ENCODE measurements at regions of chr1 and their contacts with region 1.

Region 1: DNA sequence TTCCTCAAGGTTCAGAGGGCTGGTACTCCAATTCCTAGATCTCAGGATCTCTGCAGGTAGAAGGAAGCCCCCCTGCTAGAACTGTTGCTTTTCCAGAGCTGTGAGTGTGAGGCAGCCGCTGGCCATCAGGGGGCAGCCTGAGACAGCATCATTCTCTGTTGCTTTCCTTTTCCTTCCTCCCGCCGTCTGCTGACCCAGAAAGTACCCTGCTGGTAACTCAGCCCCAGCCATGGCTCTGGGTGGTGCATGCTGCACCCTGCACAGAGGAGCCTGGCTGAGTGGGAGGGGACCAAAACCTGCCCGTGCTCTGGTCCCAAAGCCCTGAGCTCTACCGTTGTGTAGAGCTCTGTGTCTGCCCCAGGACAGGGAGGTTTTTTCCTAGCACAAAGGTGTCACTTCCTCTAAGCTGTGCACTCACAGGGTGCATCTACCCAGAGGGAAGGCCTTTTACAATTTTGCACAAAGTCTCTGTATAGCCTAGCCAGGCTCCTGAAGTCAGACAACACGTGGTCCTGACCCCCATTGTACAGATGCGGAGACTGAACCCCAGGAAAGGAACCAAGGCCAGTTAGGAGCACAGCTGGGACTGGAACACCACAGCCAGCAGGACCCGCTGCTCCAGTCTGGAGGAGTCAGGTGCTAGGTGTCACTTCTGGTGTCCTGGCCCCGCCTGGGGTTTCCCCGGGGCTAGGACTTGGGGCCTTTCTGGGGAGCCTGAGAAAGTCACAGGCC is 5.6 kb upstream of the FAM131C start:
- DNase-seq: peak; percentile 85 to 93
- H3K4me3 ChIP-seq: no peak overlapping the region
- H3K27ac ChIP-seq: peak overlapping the region in 1 of 5 donors; percentile 49
- H3K4me1 ChIP-seq: peaks cover 8 to 39% (median 31%) of the 10 kb centered on the region in 4 donors
- H3K27me3 ChIP-seq: peaks cover 0 to 6% (median 0%) of the 10 kb centered on the region in 3 donors
- CTCF ChIP-seq: peak in 5 of 7 experiments; percentile 83 to 94 (median 87)
- EP300 ChIP-seq: no peak
- POLR2A ChIP-seq: no peak

Region 2: DNA sequence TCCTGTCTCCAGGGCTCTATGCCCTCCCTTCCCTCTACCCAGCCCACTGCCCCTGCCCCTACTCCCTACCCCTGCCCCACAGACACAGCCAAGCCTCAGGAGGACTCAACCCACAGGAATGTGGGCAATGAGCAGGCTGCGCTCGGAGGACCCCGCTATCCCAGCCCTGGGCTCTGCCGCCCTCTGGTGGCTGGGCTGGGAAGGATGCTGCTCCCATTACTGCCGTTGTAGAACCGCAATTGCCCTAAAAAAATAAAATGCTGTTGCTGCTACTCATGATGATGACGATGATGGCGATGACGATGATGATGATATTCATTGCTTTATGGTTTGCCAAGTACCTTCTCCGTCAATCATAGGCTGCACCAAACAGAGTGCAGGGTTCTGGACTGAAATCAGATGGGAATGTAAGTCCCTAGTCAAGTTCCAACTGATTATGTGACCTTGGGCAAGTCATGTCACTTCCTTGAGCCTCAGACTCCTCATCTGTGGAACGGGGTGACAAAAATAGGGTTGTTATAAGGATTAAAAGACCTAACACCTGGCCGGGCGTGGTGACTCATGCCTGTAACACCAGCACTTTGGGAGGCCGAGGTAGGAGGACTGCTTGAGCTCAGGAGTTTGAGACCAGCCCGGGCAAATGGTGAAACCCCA is 108.8 kb after region 1 on chr1:
- intact Hi-C with region 1: loop called (anchors 2 kb)
- DNase-seq: peak; percentile 82 to 93
- H3K4me3 ChIP-seq: no peak overlapping the region
- H3K27ac ChIP-seq: peak overlapping the region in 1 of 5 donors; percentile 46
- H3K4me1 ChIP-seq: peaks cover 0 to 41% (median 24%) of the 10 kb centered on the region in 4 donors
- H3K27me3 ChIP-seq: peaks cover 0 to 15% (median 0%) of the 10 kb centered on the region in 3 donors
- CTCF ChIP-seq: peak in 5 of 7 experiments; percentile 89 to 99 (median 98)
- EP300 ChIP-seq: no peak
- POLR2A ChIP-seq: no peak

Region 3: DNA sequence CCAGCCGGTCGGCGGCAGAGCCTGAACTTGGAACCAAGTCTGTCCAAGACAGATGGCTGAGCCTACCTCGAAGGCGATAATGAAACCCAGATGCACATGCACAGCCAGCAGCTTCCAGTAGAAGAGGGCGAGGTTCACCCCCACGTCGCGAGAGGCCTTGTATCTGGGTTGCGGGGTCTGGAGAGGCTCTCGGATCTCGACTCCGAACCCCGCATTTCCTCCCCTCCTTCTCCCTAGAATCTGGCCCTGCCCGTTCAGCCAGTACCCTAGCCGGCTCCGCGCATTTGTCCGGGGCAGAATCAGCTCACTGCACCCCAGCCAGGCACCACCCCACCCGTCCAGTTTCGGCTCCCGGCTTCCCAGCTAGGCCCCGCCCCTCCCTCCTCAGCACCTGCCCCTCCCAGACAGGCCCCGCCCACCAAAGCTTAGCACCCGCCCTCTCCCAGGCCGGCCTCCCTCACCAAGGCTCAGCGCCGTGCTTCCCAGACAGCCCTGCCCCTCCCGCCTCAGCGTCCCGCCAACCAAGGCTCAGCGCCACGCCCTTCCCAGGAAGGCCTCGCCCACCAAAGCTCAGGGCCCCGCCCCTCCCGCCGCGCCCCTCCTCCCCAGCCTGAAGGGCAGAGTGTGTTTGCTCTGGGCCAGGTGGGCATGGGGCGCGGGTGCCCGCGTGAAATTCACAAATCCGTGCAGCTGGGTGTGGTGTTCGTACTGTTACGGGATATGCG is 138.1 kb after region 1 on chr1:
- intact Hi-C with region 1: no loop called
- DNase-seq: peak; percentile 99 to 100
- H3K4me3 ChIP-seq: peak overlapping the region; percentile 49 to 56 (median 52)
- H3K27ac ChIP-seq: peak overlapping the region; percentile 83 to 92 (median 85)
- H3K4me1 ChIP-seq: peaks cover 14 to 36% (median 29%) of the 10 kb centered on the region in 4 donors
- H3K27me3 ChIP-seq: no peaks in the 10 kb centered on the region
- CTCF ChIP-seq: no peak
- EP300 ChIP-seq: no peak
- POLR2A ChIP-seq: peak in 1 of 4 donors; percentile 35

Region 4: DNA sequence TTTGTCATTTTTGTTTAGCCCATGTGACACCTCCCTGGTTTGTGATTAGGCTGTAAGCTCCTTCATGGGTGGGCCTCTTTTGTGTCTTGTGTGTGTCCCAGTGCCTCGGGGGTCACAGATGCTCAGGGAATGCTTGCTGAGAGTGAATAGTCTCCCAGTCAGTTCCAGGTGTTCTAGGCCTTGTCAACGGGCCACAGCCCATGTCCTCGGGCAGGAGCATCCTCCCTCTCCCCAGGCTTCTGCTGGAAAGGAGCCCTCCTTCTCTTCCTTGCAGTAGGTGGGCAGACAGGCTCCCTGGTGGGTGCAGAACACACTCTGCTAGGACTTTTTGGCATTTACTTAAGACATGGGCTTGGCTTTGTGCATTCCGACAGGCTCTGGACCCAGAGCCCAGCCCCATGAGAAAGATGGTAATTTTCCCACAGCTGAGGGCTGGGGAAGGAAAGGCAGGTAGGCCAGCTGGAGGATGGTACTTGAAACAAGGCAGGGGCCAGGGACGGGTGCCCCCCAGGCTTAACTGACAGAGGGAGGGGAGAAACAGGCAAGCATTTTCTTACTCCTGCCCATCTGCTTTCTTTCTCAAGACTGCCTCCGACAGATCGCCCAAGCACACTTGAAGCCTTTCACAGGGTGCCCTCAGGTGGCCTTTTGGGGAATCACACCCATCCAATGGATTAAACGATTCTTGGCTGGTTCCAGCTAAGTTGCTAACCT is 165.0 kb after region 1 on chr1:
- intact Hi-C with region 1: loop called (anchors 5 kb)
- DNase-seq: peak; percentile 89 to 94
- H3K4me3 ChIP-seq: no peak overlapping the region
- H3K27ac ChIP-seq: peak overlapping the region in 1 of 5 donors; percentile 57
- H3K4me1 ChIP-seq: peaks cover 24 to 48% (median 31%) of the 10 kb centered on the region in 4 donors
- H3K27me3 ChIP-seq: no peaks in the 10 kb centered on the region
- CTCF ChIP-seq: peak in 5 of 7 experiments; percentile 71 to 91 (median 88)
- EP300 ChIP-seq: no peak
- POLR2A ChIP-seq: no peak

Region 5: GRCh38 chr1:16354619-16355018 is 275.5 kb after region 1 on chr1:
- intact Hi-C with region 1: loop called (anchors 5 kb)
- DNase-seq: no peak
- H3K4me3 ChIP-seq: no peak overlapping the region
- H3K27ac ChIP-seq: no peak overlapping the region
- H3K4me1 ChIP-seq: peaks cover 10 to 26% (median 19%) of the 10 kb centered on the region in 4 donors
- H3K27me3 ChIP-seq: no peaks in the 10 kb centered on the region
- CTCF ChIP-seq: no peak
- EP300 ChIP-seq: no peak
- POLR2A ChIP-seq: no peak

Region 6: DNA sequence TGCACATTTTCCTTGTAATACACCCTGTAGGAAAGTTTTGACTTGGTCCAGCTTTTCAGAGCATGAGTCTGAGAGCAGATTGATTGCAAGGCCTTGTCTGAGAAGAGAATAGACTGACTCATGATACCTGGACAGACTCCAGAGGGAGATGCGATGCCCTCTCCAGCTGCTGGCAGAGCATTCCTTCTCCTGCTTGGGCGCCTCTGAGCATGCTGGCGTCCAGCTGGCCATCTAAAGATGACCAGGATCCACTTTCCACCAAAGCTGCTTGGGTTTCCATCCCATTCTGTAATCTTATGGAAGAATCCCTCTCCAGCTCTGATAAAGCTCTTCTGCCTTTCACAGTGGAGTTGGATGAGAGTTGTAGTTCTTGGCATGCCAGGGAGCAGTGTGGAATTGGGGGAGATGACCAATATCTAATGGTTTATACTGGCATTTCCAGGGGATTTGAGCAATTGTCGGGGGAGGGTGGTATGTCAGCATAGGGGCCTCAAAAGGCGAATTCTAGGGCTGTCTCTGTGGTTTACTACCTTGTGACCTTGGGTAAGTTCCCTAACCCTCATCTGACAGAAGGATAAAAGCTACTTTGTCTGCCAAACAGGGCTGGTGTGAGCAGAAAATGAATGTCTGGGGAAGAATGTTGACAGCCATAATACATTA is 307.5 kb after region 1 on chr1:
- intact Hi-C with region 1: no loop called
- DNase-seq: no peak
- H3K4me3 ChIP-seq: peak overlapping the region in 3 of 4 donors; percentile 25 to 40 (median 32)
- H3K27ac ChIP-seq: peak overlapping the region in 4 of 5 donors; percentile 26 to 80 (median 68)
- H3K4me1 ChIP-seq: peaks cover 50 to 79% (median 67%) of the 10 kb centered on the region in 4 donors
- H3K27me3 ChIP-seq: no peaks in the 10 kb centered on the region
- CTCF ChIP-seq: no peak
- EP300 ChIP-seq: no peak
- POLR2A ChIP-seq: no peak